ENCODE measurements at regions of chr16 and their contacts with region 1.

Region 1: GRCh38 chr16:55370762-55371482 is 46.9 kb downstream of the IRX6 start:
- DNase-seq: peak; percentile 64 to 98 (median 82)

Region 2: DNA sequence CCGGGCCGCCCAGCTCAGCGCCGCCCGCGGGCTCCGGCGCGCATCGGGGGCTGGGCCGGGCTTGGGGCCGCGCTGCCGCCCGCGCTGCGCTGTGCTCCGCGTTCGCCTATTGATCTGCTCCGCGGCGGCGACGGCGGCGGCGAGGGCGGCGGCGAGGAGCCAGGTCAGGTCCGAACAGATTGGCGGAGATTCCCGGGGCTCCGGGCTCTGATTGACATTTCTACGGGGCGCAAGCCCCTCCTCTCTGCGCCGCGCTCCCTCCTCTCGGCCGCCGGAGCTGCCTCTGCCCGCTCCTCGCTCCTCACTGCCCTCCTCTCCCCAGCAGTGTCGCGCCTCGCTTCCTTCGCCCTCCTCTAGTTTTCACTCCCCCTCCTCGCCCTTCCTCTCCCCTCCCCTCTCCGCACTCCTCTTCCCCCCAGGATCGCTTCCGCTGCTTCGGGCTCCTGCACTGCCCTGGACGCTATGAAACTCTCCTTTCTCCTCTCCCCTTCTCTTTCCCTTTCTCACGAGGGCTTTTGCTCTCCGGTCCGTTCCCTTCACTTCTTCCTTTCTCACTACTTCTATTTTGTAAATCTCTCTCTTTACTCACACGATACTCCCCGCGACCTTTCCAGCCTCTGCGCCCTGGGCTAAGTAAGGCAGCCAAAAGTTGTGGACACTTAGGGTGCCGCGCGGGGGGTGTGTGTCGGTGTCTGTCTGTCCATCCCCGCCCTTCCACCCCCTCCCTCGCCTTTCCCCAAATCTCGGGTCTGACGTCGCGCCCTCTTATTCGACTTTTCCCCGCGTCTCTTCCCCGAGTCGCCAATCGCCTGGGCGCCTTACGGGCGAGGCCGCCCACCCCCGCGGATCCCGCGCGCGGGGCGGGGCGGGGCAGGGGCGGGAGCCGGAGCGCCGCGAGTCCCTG is 1084.6 kb before region 1 on chr16 and contains the start of gene IRX3:
- intact Hi-C with region 1: loop called (anchors 10 kb)
- DNase-seq: peak in 1 of 10 donors; percentile 49

Region 3: GRCh38 chr16:54929090-54930004 is 441.6 kb before region 1 on chr16:
- intact Hi-C with region 1: loop called (anchors 5 kb)
- DNase-seq: peak; percentile 88 to 99 (median 96)

Measured in posterior cingulate gyrus (tissue), 11 donors.